CD4-positive, alpha-beta T cell (primary cell): ENCODE measurements at regions of chr21 and their contacts with region 1.

Region 1: GRCh38 chr21:31580866-31581276 is 78.6 kb upstream of the SOD1 start:
- DNase-seq: peak; percentile 58 to 85 (median 72)
- ATAC-seq: peak; percentile 96
- H3K4me3 ChIP-seq: no peak overlapping the region
- H3K4me3 Mint-ChIP-seq: no peak overlapping the region
- H3K27ac ChIP-seq: no peak overlapping the region
- H3K27ac Mint-ChIP-seq: no peak overlapping the region
- H3K4me1 ChIP-seq: peaks cover 4% of the 10 kb centered on the region
- H3K4me1 Mint-ChIP-seq: no peaks in the 10 kb centered on the region
- H3K27me3 ChIP-seq: no peaks in the 10 kb centered on the region
- H3K27me3 Mint-ChIP-seq: no peaks in the 10 kb centered on the region
- CTCF ChIP-seq: peak; percentile 88

Region 2: DNA sequence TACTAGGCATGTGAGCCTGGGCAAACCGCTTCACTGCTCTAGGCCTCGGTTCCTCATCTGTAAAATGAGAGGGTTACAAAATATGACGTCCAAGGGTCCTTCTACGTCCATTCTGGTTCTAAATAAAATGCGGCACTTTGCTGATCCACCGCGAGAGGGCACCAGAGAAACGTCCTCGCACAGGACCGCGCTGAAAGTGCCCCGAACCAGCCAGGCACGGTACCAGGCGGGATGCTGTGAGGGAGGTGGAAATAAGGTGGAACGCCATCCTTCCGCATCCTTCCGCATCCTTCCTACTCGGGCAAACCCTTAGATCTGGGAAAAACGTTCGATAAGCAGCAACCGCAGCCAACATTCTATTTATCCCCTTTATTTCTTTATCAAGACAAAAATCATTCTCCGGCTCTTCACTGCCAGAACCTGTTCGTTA is 482.3 kb before region 1 on chr21:
- CTCF ChIA-PET with region 1: interaction called, 12 read pairs
- POLR2A ChIA-PET with region 1: no interaction called
- intact Hi-C with region 1: loop called (anchors 1 kb)
- DNase-seq: peak; percentile 53 to 86 (median 68)
- ATAC-seq: peak; percentile 89
- H3K4me3 ChIP-seq: no peak overlapping the region
- H3K4me3 Mint-ChIP-seq: no peak overlapping the region
- H3K27ac ChIP-seq: no peak overlapping the region
- H3K27ac Mint-ChIP-seq: no peak overlapping the region
- H3K4me1 ChIP-seq: peaks cover 26% of the 10 kb centered on the region
- H3K4me1 Mint-ChIP-seq: peaks cover 30% of the 10 kb centered on the region
- H3K27me3 ChIP-seq: no peaks in the 10 kb centered on the region
- H3K27me3 Mint-ChIP-seq: no peaks in the 10 kb centered on the region
- CTCF ChIP-seq: peak; percentile 93

Region 3: GRCh38 chr21:31198575-31198974 is 382.3 kb before region 1 on chr21:
- CTCF ChIA-PET with region 1: interaction called, 19 read pairs
- POLR2A ChIA-PET with region 1: interaction called, 4 read pairs
- intact Hi-C with region 1: loop called (anchors 1 kb)
- DNase-seq: peak in 3 of 14 experiments; percentile 66 to 72 (median 66)
- ATAC-seq: peak; percentile 56
- H3K4me3 ChIP-seq: no peak overlapping the region
- H3K4me3 Mint-ChIP-seq: peak overlapping the region; percentile 8
- H3K27ac ChIP-seq: no peak overlapping the region
- H3K27ac Mint-ChIP-seq: peak overlapping the region; percentile 38
- H3K4me1 ChIP-seq: peaks cover 7% of the 10 kb centered on the region
- H3K4me1 Mint-ChIP-seq: peaks cover 47% of the 10 kb centered on the region
- H3K27me3 ChIP-seq: no peaks in the 10 kb centered on the region
- H3K27me3 Mint-ChIP-seq: no peaks in the 10 kb centered on the region
- CTCF ChIP-seq: peak; percentile 73

Region 4: GRCh38 chr21:31213795-31214194 is 367.1 kb before region 1 on chr21:
- CTCF ChIA-PET with region 1: interaction called, 8 read pairs
- POLR2A ChIA-PET with region 1: no interaction called
- intact Hi-C with region 1: loop called in 1 of 2 experiments (anchors 1 kb)
- DNase-seq: peak in 4 of 14 experiments; percentile 8 to 45 (median 36)
- ATAC-seq: no peak
- H3K4me3 ChIP-seq: no peak overlapping the region
- H3K4me3 Mint-ChIP-seq: no peak overlapping the region
- H3K27ac ChIP-seq: no peak overlapping the region
- H3K27ac Mint-ChIP-seq: no peak overlapping the region
- H3K4me1 ChIP-seq: no peaks in the 10 kb centered on the region
- H3K4me1 Mint-ChIP-seq: no peaks in the 10 kb centered on the region
- H3K27me3 ChIP-seq: no peaks in the 10 kb centered on the region
- H3K27me3 Mint-ChIP-seq: no peaks in the 10 kb centered on the region
- CTCF ChIP-seq: no peak